Mammary epithelial cell (primary cell): ENCODE measurements at regions of chr4 and their contacts with region 1.

Region 1: DNA sequence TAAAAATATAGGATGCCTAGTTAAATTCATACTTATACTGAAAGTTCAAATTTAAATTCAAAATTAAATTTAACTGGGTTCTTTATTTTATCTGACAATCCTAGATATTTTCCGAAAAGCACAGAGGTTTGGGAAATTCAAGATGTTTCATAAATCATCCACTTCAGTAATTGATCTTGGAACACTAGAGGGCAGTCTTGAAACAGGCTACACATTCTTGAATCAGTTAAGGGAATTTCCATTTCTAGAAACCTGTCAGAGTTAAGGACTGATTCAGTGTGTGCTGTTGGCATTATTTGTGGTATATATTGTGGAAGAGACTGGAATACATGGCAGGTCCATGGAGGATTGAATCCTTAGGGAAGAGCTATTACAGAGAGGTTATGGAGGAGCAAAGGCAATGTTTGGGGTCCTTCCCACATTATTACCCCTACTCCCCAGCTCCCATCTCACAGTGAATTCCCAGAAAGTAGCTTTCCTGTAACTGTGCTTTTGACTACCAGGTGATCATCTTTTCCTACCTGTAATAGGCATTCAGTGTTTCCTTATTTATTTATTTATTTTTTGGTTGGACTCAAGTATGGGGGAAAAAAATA is 92.9 kb downstream of the EGF start:
- DNase-seq: peak; percentile 72
- H3K4me3 ChIP-seq: no peak overlapping the region
- H3K27ac ChIP-seq: no peak overlapping the region
- H3K4me1 ChIP-seq: peaks cover 5% of the 10 kb centered on the region
- H3K27me3 ChIP-seq: no peaks in the 10 kb centered on the region
- CTCF ChIP-seq: peak; percentile 74 to 76

Region 2: DNA sequence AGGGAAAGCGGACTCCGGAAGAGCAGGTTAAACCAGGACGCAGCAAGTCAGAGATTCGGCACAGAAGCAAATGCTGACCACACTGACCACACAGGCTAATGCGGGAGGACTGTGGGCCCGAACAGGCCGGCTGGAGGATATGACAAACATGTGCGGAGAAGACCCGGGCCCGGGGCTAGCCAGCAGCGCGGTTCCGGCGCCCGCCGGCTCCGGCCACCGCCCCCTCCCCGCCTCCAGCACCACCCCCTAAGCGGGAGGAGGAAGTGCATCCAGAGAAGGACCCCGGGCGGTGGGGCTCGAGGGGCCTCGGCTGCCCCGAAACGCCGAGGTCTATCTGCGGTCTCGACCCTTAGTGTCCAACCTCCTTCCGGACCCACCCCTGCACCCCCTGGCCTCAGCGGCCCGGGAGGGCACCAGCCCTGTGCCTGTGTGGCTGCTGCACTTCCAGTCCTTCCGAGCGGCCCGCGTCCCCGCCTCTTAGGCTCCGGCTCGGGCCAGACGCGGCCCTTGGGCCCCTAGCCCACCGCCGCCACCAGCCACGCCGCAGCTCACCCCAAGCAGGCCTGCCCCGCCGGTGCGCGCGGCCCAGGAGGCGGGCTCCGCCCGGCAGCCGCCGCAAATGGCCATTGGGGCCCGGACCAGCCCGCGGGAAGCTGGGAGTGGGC is 190.8 kb after region 1 on chr4:
- CTCF ChIA-PET with region 1: interaction called, 7 read pairs
- dilution Hi-C with region 1: no loop called
- in situ Hi-C with region 1: no loop called
- intact Hi-C with region 1: loop called (anchors 1 kb)
- DNase-seq: peak; percentile 40
- H3K4me3 ChIP-seq: peak overlapping the region; percentile 62 to 82 (median 78)
- H3K27ac ChIP-seq: peak overlapping the region; percentile 71
- H3K4me1 ChIP-seq: peaks cover 29% of the 10 kb centered on the region
- H3K27me3 ChIP-seq: no peaks in the 10 kb centered on the region
- CTCF ChIP-seq: no peak

Region 3: DNA sequence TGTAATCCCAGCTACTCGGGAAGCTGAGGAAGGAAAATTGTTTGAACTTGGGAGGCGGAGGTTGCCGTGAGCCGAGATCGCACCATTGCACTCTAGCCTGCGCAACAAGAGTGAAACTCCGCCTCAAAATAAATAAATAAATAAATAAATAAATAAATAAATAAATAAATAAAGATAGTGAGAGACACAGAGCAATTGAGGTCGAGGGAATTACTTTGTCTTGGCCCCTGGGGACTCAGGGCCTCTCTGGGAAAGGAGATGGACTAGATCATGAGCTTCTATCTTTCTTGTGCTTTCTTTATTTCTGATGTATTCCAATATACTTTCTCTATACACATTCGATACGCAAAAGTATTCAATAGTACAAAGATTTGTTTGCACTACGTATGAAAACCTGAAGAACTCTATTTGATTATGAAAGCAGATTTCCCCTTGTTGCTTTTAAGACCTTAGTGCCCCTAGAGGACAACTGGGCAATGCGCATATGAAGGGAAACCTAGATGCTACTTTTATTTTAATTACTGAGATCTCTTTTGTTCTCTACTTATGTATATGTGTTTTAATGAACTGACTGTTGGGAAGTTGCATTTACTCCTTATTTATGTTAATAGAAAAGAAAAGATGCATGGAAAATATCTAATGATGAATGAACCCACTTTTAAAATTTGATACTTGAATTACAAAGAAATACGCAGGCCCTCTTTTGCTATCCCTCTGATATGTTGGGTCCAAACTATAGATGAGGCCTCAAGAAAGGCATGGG is 205.6 kb after region 1 on chr4:
- CTCF ChIA-PET with region 1: no interaction called
- dilution Hi-C with region 1: no loop called
- in situ Hi-C with region 1: no loop called
- intact Hi-C with region 1: loop called (anchors 1 kb)
- DNase-seq: peak; percentile 32
- H3K4me3 ChIP-seq: no peak overlapping the region
- H3K27ac ChIP-seq: no peak overlapping the region
- H3K4me1 ChIP-seq: no peaks in the 10 kb centered on the region
- H3K27me3 ChIP-seq: no peaks in the 10 kb centered on the region
- CTCF ChIP-seq: peak; percentile 81 to 93

Region 4: GRCh38 chr4:110310795-110311194 is 305.2 kb after region 1 on chr4:
- CTCF ChIA-PET with region 1: no interaction called
- dilution Hi-C with region 1: no loop called
- in situ Hi-C with region 1: loop called in 1 of 2 experiments (anchors 25 kb)
- intact Hi-C with region 1: loop called (anchors 5 kb)
- DNase-seq: no peak
- H3K4me3 ChIP-seq: no peak overlapping the region
- H3K27ac ChIP-seq: no peak overlapping the region
- H3K4me1 ChIP-seq: no peaks in the 10 kb centered on the region
- H3K27me3 ChIP-seq: peaks cover 3% of the 10 kb centered on the region
- CTCF ChIP-seq: no peak

Region 5: GRCh38 chr4:110510955-110511544 is 505.5 kb after region 1 on chr4:
- CTCF ChIA-PET with region 1: interaction called, 8 read pairs
- dilution Hi-C with region 1: no loop called
- in situ Hi-C with region 1: loop called (anchors 5 kb)
- intact Hi-C with region 1: loop called (anchors 1 kb)
- DNase-seq: peak; percentile 45
- H3K4me3 ChIP-seq: no peak overlapping the region
- H3K27ac ChIP-seq: no peak overlapping the region
- H3K4me1 ChIP-seq: peaks cover 3% of the 10 kb centered on the region
- H3K27me3 ChIP-seq: peaks cover 3% of the 10 kb centered on the region
- CTCF ChIP-seq: peak; percentile 57 to 63

Region 6: GRCh38 chr4:110586131-110586850 is 580.7 kb after region 1 on chr4:
- CTCF ChIA-PET with region 1: interaction called, 4 read pairs
- dilution Hi-C with region 1: no loop called
- in situ Hi-C with region 1: no loop called
- intact Hi-C with region 1: loop called (anchors 2 kb)
- DNase-seq: peak; percentile 46
- H3K4me3 ChIP-seq: peak overlapping the region in 1 of 3 experiments; percentile 19
- H3K27ac ChIP-seq: no peak overlapping the region
- H3K4me1 ChIP-seq: no peaks in the 10 kb centered on the region
- H3K27me3 ChIP-seq: no peaks in the 10 kb centered on the region
- CTCF ChIP-seq: peak; percentile 53 to 68